ENCODE measurements at regions of chr5 and their contacts with region 1.

Region 1: GRCh38 chr5:132866342-132867045 is at the starts of genes GDF9 and UQCRQ:
- DNase-seq: peak; percentile 93 to 97
- H3K4me3 ChIP-seq: peak within 1 kb of the TSS; percentile 80 to 99 (median 88)
- H3K27ac ChIP-seq: peak within 1 kb of the TSS; percentile 93
- H3K4me1 ChIP-seq: peaks cover 4 to 7% (median 6%) of the 10 kb centered on the region in 4 experiments; a peak in 5 of 7 replicates
- H3K27me3 ChIP-seq: no peaks in the 10 kb centered on the region
- CTCF ChIP-seq: peak; percentile 32 to 50 (median 44)
- EP300 ChIP-seq: peak in 1 of 2 experiments; percentile 99; a peak in 2 of 3 replicates
- POLR2A ChIP-seq: peak; percentile 82 to 93; a peak in 2 of 3 replicates
- RAD21 ChIP-seq: peak; percentile 61 to 70
- total RNA-seq, gene GDF9: 0.34 TPM in 1 of 2 replicates, not detected in the other
- total RNA-seq, gene UQCRQ: 282 and 293 TPM in 2 replicates

Region 2: DNA sequence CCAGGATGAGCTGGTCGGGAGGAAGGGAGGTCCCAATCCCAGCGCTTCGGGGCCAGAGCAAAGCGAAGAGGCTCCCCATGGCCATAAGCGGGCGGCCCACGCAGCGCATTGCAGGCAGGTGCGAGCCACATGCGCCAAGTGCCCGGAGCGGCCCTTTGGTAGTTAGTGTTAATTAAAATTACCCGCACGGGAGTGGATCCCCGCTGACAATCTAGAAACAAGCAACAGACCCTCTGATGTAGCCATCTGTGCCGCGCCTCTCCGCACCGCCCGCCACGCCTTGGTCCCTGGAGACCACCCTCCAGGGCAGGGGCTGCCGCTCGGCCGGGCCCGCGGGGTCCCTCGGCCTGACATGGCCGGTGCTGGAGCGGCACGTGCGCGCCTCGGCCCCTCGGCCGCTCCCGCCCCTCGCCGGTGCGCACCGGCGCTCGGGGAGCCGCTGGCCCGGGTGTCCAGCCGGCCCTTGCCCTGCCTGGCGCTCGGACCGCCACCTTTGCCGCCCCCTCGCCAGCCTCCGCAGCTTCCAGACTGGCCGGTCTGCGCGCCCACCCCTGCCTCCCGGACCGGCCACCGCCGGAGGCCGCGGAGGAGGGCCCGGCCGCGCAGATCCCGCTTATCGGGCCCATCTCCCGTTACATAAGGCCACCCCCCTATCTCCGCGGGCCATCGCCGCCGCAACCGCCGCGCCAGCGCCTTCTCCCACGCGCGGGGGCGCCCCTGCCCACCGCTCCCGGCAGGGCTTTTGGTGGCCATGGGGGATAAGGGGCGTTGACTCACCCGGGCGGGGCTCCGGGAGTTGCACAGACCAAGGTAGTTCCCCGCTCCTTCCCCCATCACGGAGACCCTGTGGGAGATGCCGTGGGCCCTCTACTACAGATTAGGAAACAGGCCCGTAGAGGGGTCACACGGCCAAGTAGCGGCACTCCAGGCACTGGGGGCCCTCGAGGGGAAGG is 210.4 kb before region 1 on chr5:
- CTCF ChIA-PET with region 1: no interaction called
- POLR2A ChIA-PET with region 1: no interaction called
- DNase-seq: peak in 1 of 2 experiments; percentile 72
- H3K4me3 ChIP-seq: peak overlapping the region; percentile 11 to 57 (median 22); a peak in 7 of 8 replicates
- H3K27ac ChIP-seq: no peak overlapping the region
- H3K4me1 ChIP-seq: peaks cover 0 to 8% (median under 1%) of the 10 kb centered on the region in 4 experiments; a peak in 4 of 7 replicates
- H3K27me3 ChIP-seq: peaks cover 10 to 40% (median 31%) of the 10 kb centered on the region in 4 experiments
- CTCF ChIP-seq: no peak
- EP300 ChIP-seq: no peak
- POLR2A ChIP-seq: no peak
- RAD21 ChIP-seq: peak; percentile 7 to 34; a peak in 2 of 4 replicates

Region 3: DNA sequence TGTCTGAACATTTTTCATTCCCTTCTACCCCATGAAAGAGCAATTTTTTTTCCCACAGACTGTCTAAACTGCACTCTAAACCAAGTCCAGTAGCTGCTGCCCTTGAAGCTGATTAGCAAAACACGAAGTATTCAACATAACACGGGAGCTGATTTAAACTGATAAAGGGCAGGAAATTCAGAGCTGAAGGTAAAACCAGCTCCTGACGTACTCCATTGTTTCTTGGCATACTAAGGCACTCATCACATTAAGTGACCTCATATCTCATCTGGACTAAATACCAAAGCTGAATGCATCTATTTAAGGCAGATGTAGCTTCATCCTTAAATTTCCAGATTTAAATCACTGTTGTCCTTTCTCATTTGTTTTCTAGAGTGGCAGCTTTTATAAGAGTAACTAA is 12.2 kb before region 1 on chr5:
- CTCF ChIA-PET with region 1: interaction called, 30 read pairs
- POLR2A ChIA-PET with region 1: interaction called, 6 read pairs
- DNase-seq: no peak
- H3K4me3 ChIP-seq: no peak overlapping the region
- H3K27ac ChIP-seq: no peak overlapping the region
- H3K4me1 ChIP-seq: peaks cover 0 to 1% (median 0%) of the 10 kb centered on the region in 4 experiments; a peak in 1 of 7 replicates
- H3K27me3 ChIP-seq: no peaks in the 10 kb centered on the region
- CTCF ChIP-seq: no peak
- EP300 ChIP-seq: no peak
- POLR2A ChIP-seq: no peak
- RAD21 ChIP-seq: no peak

Region 4: GRCh38 chr5:132877938-132878337 is 11.4 kb after region 1 on chr5:
- CTCF ChIA-PET with region 1: interaction called, 9 read pairs
- POLR2A ChIA-PET with region 1: interaction called, 15 read pairs
- DNase-seq: no peak
- H3K4me3 ChIP-seq: no peak overlapping the region
- H3K27ac ChIP-seq: no peak overlapping the region
- H3K4me1 ChIP-seq: no peaks in the 10 kb centered on the region
- H3K27me3 ChIP-seq: no peaks in the 10 kb centered on the region
- CTCF ChIP-seq: no peak
- EP300 ChIP-seq: no peak
- POLR2A ChIP-seq: no peak
- RAD21 ChIP-seq: no peak

Region 5: GRCh38 chr5:132998556-132998955 is 132.1 kb after region 1 on chr5:
- CTCF ChIA-PET with region 1: no interaction called
- POLR2A ChIA-PET with region 1: no interaction called
- DNase-seq: no peak
- H3K4me3 ChIP-seq: no peak overlapping the region
- H3K27ac ChIP-seq: no peak overlapping the region
- H3K4me1 ChIP-seq: no peaks in the 10 kb centered on the region
- H3K27me3 ChIP-seq: no peaks in the 10 kb centered on the region
- CTCF ChIP-seq: no peak
- EP300 ChIP-seq: no peak
- POLR2A ChIP-seq: no peak
- RAD21 ChIP-seq: no peak